ENCODE measurements at regions of chr6 and their contacts with region 1.

Region 1: DNA sequence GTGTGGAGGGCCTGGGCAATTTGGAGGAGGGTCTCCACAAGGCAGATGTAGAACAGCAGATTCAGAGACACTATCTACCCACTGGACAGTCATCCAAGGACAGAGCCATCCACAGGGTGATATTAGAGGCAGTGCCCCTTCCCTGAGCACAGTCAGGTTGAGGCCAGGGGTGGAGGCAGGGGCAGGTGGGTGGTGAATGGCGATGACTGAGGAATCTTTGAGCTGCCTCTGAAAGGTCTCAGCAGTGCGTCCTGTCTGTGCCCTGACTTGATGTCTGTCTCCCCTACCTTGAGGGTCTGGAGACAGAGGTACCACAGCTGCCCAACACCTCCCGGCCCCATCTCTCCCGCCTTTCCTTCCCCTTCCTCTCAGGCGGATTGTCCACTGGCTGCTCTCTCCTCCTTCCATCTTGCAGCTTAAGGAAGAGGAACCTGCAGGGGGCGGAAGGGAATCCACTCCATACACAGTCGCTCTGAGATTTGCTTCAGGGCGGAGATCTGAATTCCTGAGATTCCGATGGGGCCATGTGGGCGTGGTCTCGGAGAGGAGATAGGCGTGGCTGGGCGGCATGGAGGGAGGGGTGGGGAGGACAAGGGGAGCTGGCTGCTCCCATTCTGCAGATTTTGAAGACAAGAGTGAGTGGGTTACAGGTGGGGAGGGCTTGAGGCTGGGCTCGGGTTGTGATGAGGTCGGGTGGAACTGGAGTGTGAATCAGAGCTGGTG is 1.7 kb downstream of the MUCL3 start:
- DNase-seq: peak; percentile 82 to 91
- H3K4me3 ChIP-seq: no peak overlapping the region
- H3K27ac ChIP-seq: no peak overlapping the region
- H3K4me1 ChIP-seq: peaks cover 8% of the 10 kb centered on the region; the same call in 1 of the 2 replicates
- H3K27me3 ChIP-seq: no peaks in the 10 kb centered on the region
- CTCF ChIP-seq: peak; percentile 80

Region 2: GRCh38 chr6:30494291-30494861 is 448.1 kb before region 1 on chr6:
- CTCF ChIA-PET with region 1: interaction called, 11 read pairs
- POLR2A ChIA-PET with region 1: no interaction called
- intact Hi-C with region 1: no loop called
- DNase-seq: no peak
- H3K4me3 ChIP-seq: no peak overlapping the region
- H3K27ac ChIP-seq: no peak overlapping the region
- H3K4me1 ChIP-seq: peaks cover 17% of the 10 kb centered on the region
- H3K27me3 ChIP-seq: no peaks in the 10 kb centered on the region
- CTCF ChIP-seq: no peak

Region 3: GRCh38 chr6:30955367-30956042 is 13.0 kb after region 1 on chr6:
- CTCF ChIA-PET with region 1: interaction called, 16 read pairs
- POLR2A ChIA-PET with region 1: no interaction called
- intact Hi-C with region 1: no loop called
- DNase-seq: peak in 1 of 2 experiments; percentile 76
- H3K4me3 ChIP-seq: peak overlapping the region; percentile 52
- H3K27ac ChIP-seq: no peak overlapping the region
- H3K4me1 ChIP-seq: peaks cover 9% of the 10 kb centered on the region
- H3K27me3 ChIP-seq: peaks cover 6% of the 10 kb centered on the region; the same call in 1 of the 2 replicates
- CTCF ChIP-seq: no peak

Region 4: GRCh38 chr6:31042806-31043205 is 100.3 kb after region 1 on chr6:
- CTCF ChIA-PET with region 1: interaction called, 3 read pairs
- POLR2A ChIA-PET with region 1: no interaction called
- intact Hi-C with region 1: loop called (anchors 1 kb)
- DNase-seq: peak; percentile 54 to 61
- H3K4me3 ChIP-seq: no peak overlapping the region
- H3K27ac ChIP-seq: no peak overlapping the region
- H3K4me1 ChIP-seq: peaks cover 9% of the 10 kb centered on the region
- H3K27me3 ChIP-seq: no peaks in the 10 kb centered on the region
- CTCF ChIP-seq: peak; percentile 75

Region 5: DNA sequence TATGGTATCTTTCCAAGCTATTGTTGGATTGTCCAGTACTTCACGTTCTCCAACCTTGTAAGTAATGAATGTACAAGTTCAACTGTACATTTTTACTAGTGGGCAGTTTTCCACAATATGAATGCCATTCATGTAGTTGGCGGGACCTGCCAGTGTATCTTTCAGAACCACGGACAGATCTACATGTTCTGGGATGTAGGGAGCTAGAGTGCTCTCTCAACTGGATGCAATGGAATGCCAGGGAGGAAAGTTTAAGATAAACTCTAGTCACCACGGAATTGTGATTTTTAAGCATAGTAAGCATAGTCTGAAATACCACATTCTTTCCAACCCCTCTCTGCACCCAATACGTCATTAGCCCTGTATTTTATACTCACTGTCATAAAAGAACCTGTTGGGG is 350.8 kb after region 1 on chr6:
- CTCF ChIA-PET with region 1: no interaction called
- POLR2A ChIA-PET with region 1: interaction called, 27 read pairs
- intact Hi-C with region 1: no loop called
- DNase-seq: no peak
- H3K4me3 ChIP-seq: no peak overlapping the region
- H3K27ac ChIP-seq: no peak overlapping the region
- H3K4me1 ChIP-seq: no peaks in the 10 kb centered on the region
- H3K27me3 ChIP-seq: peaks cover 41% of the 10 kb centered on the region
- CTCF ChIP-seq: no peak